HEK293T (cell line): ENCODE measurements at regions of chr14 and their contacts with region 1.

Region 1: DNA sequence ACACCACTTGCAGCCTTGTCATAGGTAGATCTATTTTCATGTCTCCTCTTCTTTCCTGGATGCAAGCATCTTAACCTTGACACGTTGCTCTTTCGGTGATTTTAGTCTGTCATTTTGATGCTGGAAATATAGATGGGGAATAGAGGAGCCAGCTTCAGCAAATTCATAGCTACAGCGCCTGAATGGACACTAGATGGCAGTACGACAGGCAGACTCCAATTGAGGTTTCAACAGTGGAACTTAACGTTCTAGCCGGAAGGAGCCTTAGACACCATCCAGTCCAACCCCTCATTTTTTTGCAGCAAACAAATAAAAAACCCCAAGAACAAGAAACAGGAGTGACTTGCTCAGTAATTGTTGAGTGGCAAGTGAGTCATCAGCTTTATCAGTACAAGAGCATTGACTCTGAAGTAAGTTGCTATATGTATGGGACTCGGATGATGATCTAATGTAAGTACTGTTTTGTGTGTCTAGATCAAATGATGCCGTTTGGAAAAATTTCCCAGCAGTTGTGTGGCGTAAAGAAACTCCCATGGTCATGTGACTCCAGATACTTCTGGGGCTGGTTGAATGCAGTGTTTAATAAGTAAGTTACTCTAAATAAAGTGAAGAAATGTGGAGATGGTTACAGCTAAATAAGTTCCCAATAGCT is 9.0 kb downstream of the DMAC2L start:
- DNase-seq: peak; percentile 74

Region 2: GRCh38 chr14:50335389-50335788 is 14.3 kb after region 1 on chr14:
- CTCF ChIA-PET with region 1: interaction called, 10 read pairs
- POLR2A ChIA-PET with region 1: interaction called, 3 read pairs
- DNase-seq: peak; percentile 70

Region 3: GRCh38 chr14:50342221-50343078 is 21.3 kb after region 1 on chr14:
- CTCF ChIA-PET with region 1: interaction called, 10 read pairs
- POLR2A ChIA-PET with region 1: no interaction called
- DNase-seq: peak; percentile 25

Region 4: DNA sequence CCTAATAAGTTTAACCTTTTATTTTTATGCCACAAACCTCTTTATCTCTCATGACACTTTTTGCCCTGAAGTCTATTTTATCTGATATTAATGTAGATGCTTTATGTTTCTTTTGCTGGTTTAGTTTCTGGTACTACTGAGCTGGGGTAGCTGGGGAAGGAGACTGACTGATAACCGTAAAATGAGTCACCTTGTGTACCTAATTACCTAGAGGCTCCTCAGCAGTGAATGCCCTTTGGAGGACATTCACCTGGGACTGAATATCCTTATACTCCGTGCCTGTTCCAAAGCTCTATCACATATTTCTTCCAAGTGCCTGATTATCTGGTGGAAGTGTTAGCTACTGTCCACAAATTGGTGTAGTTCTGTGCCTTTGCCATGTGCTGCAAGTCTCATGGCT is 252.7 kb after region 1 on chr14:
- CTCF ChIA-PET with region 1: no interaction called
- POLR2A ChIA-PET with region 1: no interaction called
- DNase-seq: no peak